Motor neuron (in vitro differentiated cells): ENCODE measurements at regions of chr16 and their contacts with region 1.

Region 1: DNA sequence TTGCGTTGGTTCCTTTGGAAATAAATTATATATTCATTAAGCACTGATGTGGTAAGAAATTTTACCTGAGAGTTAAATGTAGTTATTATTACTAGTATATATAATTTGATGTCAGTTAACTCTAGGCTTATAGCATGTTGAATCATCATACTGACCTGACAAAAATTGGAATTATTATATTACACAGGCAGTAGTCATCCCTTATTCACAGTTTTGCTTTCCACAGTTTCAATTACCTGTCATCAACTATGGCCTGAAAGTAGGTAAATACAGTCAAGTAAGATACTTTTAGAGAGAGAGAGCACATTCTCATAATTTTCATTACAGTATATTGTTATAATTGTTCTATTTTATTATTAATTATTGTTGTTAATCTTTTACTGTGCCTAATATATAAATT is 1074.7 kb downstream of the CDH11 start:
- ATAC-seq: no peak
- H3K4me3 ChIP-seq: no peak overlapping the region
- H3K27ac ChIP-seq: no peak overlapping the region
- H3K4me1 ChIP-seq: no peaks in the 10 kb centered on the region

Region 2: DNA sequence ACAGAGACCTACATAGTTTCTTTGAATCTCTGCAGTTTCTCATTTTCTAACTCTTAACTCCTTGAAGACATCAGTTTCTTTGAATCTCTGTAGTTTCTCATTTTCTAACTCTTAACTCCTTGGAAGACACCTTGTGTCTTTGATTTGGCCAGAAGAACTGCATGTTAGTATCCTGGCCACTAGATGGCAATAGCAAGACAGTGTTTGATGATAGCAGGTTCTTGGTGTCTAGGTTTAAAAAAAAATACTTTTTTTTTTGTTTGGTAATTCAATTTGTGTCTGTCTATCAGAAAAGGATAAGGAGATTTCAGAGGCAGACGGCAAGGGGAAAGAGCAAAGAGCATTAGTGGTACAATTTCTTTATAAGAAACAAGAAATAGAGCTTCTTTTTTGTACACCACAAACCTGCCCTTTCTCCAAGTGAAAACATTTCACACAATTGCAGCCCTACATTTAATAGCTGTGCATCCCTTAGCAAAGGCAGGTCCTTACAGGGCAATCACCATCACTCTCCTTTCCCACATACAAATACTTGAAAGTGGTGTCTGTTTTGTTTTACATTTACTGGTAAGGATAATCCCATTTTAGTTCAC is 686.1 kb before region 1 on chr16:
- in situ Hi-C with region 1: loop called in 1 of 9 experiments (anchors 25 kb)
- ATAC-seq: peak in 5 of 8 experiments; percentile 39 to 66 (median 54)
- H3K4me3 ChIP-seq: no peak overlapping the region
- H3K27ac ChIP-seq: no peak overlapping the region
- H3K4me1 ChIP-seq: peaks cover 2 to 15% of the 10 kb centered on the region in 2 donors

Region 3: DNA sequence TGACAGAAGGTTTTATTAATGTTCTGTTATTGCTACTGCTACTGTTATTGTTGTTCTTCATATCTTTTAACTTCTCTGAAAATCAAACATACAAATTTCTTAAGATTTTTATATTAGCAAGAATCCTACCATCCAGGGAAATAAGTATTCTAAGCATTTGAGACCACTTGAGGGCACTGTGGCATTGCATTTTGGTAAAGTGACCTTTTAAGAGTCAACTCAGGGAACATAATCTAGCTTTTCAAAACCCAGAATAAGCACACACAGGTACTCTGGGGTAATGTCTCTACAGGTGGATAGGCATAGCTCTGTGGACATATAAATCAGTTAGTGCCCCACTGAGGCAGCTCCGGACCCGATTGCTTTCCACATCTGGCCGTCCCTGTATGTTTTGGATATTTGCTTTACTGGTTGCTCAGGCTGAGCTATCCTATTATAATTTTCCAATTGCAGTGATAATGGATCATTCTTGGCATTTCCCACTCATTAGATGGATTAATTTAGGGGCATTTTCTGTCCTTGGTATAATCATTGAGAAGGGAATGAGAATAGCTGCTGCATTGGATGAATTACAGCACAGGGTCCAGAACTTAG is 585.9 kb before region 1 on chr16:
- in situ Hi-C with region 1: loop called in 2 of 9 experiments (anchors 25 kb)
- ATAC-seq: peak; percentile 30 to 80 (median 61)
- H3K4me3 ChIP-seq: no peak overlapping the region
- H3K27ac ChIP-seq: no peak overlapping the region
- H3K4me1 ChIP-seq: peaks cover 5 to 12% of the 10 kb centered on the region in 2 donors

Region 4: GRCh38 chr16:63702984-63703590 is 344.1 kb before region 1 on chr16:
- in situ Hi-C with region 1: loop called in 1 of 9 experiments (anchors 25 kb)
- ATAC-seq: peak in 3 of 8 experiments; percentile 19 to 38 (median 22)
- H3K4me3 ChIP-seq: no peak overlapping the region
- H3K27ac ChIP-seq: no peak overlapping the region
- H3K4me1 ChIP-seq: no peaks in the 10 kb centered on the region

Region 5: GRCh38 chr16:64416216-64417005 is 369.2 kb after region 1 on chr16:
- in situ Hi-C with region 1: no loop called
- ATAC-seq: peak in 2 of 8 experiments; percentile 16 to 60
- H3K4me3 ChIP-seq: no peak overlapping the region
- H3K27ac ChIP-seq: no peak overlapping the region
- H3K4me1 ChIP-seq: no peaks in the 10 kb centered on the region